ENCODE measurements at regions of chr16 and their contacts with region 1.

Region 1: DNA sequence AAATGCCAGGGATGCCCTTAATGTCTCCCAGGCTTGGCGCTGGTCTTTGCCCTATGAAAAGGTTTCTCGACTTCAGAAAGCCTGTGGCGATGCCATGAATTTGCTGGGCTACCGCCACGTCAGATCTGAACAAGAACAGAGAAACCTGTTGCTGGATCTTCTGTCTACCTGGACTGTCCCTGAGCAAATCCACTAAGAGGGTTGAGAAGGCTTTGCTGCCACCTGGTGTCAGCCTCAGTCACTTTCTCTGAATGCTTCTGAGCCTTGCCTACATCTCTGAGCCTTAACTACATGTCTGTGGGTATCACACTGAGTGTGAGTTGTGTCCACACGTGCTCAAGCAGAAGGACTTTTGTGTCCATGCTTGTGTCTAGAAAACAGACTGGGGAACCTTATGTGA is 11.4 kb downstream of the CHST4 start:
- DNase-seq: peak; percentile 69
- H3K4me3 Mint-ChIP-seq: no peak overlapping the region
- H3K27ac Mint-ChIP-seq: no peak overlapping the region
- H3K4me1 Mint-ChIP-seq: no peaks in the 10 kb centered on the region
- H3K27me3 Mint-ChIP-seq: peaks cover 11% of the 10 kb centered on the region
- CTCF ChIP-seq: peak; percentile 76

Region 2: DNA sequence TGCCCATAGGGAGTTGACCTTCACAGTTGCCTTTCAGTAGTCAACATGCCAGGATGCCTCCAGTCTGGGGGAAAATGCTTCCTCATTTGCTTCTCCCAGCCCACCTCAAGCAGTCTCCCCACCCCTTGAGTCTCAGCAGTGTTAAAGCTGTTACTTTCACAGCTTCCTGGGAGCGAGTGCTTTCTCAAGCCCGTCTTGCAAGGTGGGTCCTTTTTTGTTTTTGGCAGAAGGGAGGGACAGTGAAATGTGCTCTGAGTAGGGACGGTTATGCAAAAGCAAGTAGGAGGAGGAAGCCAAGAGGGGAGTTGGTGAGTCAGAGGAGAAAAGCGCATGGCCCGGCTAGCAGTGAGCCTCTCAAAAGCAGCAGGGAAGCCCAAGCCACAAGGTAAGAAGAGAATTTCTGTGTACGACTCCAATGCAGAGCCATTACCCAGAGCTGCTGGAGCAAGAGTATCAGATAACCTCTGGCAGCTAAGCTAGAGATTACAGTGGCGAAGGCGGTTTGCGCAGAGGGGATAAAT is 11.5 kb before region 1 on chr16 and contains the start of gene CHST4:
- CTCF ChIA-PET with region 1: interaction called, 20 read pairs
- POLR2A ChIA-PET with region 1: no interaction called
- intact Hi-C with region 1: no loop called
- DNase-seq: peak; percentile 70
- H3K4me3 Mint-ChIP-seq: no peak within 1 kb of the TSS
- H3K27ac Mint-ChIP-seq: no peak within 1 kb of the TSS
- H3K4me1 Mint-ChIP-seq: peaks cover 10% of the 10 kb centered on the region
- H3K27me3 Mint-ChIP-seq: no peaks in the 10 kb centered on the region
- CTCF ChIP-seq: no peak
- total RNA-seq, gene CHST4: 0.14 TPM in 1 of 2 replicates, not detected in the other

Region 3: GRCh38 chr16:71552698-71553451 is 15.2 kb after region 1 on chr16:
- CTCF ChIA-PET with region 1: interaction called, 33 read pairs
- POLR2A ChIA-PET with region 1: interaction called, 6 read pairs
- intact Hi-C with region 1: no loop called
- DNase-seq: peak; percentile 30
- H3K4me3 Mint-ChIP-seq: no peak overlapping the region
- H3K27ac Mint-ChIP-seq: no peak overlapping the region
- H3K4me1 Mint-ChIP-seq: peaks cover 11% of the 10 kb centered on the region
- H3K27me3 Mint-ChIP-seq: peaks cover 36% of the 10 kb centered on the region
- CTCF ChIP-seq: no peak